A673 (cell line): ENCODE measurements at regions of chr4 and their contacts with region 1.

Region 1: DNA sequence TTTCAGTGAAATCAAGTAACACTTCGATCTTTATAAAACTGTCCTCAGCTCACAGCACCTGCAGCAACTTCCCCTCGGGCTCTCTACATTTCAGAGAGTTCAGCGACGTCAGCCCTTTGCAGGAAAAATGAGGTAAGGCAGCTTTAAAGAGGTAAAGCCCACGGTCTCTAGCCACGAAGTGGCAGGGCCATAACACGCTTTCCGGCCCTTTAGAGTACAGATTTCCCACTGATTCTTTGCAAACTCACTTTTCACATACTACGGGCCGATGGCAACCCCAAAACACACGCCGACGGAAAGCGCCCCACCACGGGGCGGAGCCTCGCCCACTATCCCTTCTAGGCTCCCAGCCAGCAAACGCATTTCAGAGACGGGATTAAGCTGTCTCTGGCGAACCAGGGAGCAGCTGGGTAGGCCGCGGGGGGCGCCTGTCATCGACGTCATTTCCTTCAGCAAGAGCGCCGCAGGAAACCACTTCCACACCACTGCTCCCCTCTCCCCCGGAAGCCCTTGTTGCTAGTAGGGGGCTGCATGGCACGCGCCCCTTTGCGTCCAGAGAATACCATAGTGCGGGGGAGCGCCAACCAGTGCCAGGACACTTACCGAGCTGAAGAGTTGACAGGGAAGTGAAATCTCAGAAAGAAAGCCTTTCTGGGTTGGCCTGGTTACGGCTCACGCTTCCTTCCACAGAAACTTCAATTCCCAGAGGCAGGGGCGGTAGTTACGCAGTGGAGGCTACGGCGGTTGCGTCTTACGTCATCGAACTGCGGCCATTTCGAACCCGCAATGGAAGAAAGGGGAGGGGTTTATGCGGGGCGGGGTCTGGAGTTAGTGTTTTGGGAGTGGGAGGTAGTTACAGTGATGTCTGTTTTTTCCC is at the start of gene TRMT10A:
- DNase-seq: peak; percentile 98
- H3K4me3 ChIP-seq: peak within 1 kb of the TSS; percentile 65
- H3K27ac ChIP-seq: peak within 1 kb of the TSS; percentile 99
- H3K4me1 ChIP-seq: no peaks in the 10 kb centered on the region
- H3K27me3 ChIP-seq: no peaks in the 10 kb centered on the region
- CTCF ChIP-seq: no peak
- total RNA-seq, gene TRMT10A: 2.4 and 4.6 TPM in 2 replicates

Region 2: GRCh38 chr4:99529228-99529627 is 34.3 kb before region 1 on chr4:
- CTCF ChIA-PET with region 1: no interaction called
- POLR2A ChIA-PET with region 1: no interaction called
- intact Hi-C with region 1: no loop called
- DNase-seq: no peak
- H3K4me3 ChIP-seq: no peak overlapping the region
- H3K27ac ChIP-seq: no peak overlapping the region
- H3K4me1 ChIP-seq: no peaks in the 10 kb centered on the region
- H3K27me3 ChIP-seq: no peaks in the 10 kb centered on the region
- CTCF ChIP-seq: no peak

Region 3: DNA sequence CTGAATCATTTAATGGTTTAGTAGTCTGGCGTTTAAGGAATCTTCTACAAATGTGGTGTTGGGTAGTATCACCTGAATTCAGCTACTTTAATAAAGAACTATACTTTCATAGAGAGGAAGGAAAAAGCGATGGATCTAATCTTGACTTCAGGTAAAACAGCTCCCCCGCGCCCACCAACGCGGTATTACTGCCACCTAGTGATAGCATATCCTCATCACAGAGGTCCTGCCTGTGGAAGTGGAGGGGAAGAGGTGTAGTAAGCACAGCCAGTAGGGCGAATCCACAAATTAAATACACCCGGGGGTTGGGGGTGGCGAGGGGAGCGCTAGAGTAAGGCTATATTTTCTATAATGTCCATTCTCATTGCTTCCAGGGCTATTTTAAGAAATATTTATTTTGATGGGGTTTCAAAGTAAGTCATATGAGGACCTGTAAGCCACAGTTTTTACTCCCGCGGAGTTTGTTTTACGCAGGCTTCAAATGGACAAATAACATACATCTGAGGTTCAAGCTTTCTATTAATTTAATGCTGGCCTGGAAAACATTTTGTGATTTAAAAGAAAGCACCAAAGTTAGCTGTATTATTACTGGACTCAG is 244.8 kb after region 1 on chr4:
- CTCF ChIA-PET with region 1: no interaction called
- POLR2A ChIA-PET with region 1: no interaction called
- intact Hi-C with region 1: loop called (anchors 1 kb)
- DNase-seq: peak; percentile 62
- H3K4me3 ChIP-seq: no peak overlapping the region
- H3K27ac ChIP-seq: no peak overlapping the region
- H3K4me1 ChIP-seq: no peaks in the 10 kb centered on the region
- H3K27me3 ChIP-seq: peaks cover 16% of the 10 kb centered on the region
- CTCF ChIP-seq: peak; percentile 73

Region 4: DNA sequence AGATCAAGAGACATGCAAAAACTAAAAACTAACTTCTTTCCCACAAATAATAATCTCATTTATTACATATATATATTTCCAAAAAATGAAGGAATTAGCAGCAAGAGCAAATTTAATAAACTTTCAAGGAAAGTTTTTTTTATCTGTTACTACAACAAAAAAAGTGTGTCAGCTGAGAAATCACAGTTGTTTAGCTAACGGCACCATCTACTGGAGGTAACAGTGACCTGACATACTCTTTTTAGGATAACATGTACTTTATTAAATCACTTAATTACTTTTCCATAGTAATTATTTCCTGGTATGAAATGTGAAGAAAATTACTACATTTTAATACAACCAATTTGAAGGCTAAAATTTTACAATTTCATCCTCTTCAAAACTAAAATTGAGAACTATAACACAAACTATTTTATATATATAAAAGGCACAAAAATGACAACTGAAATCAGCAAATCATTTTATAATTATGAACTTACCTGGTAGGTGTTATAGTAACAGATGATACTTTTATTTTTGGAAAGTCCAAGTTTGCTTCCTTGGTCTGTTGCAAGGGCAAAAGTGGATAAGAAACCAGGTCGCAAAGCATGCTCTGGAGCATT is 321.6 kb after region 1 on chr4:
- CTCF ChIA-PET with region 1: no interaction called
- POLR2A ChIA-PET with region 1: no interaction called
- intact Hi-C with region 1: loop called (anchors 5 kb)
- DNase-seq: peak; percentile 54
- H3K4me3 ChIP-seq: no peak overlapping the region
- H3K27ac ChIP-seq: no peak overlapping the region
- H3K4me1 ChIP-seq: no peaks in the 10 kb centered on the region
- H3K27me3 ChIP-seq: no peaks in the 10 kb centered on the region
- CTCF ChIP-seq: peak; percentile 61